Psoas muscle (tissue), 8 donors: ENCODE measurements at regions of chr11 and their contacts with region 1.

Region 1: GRCh38 chr11:74672956-74673692 is 58.1 kb downstream of the CHRDL2 start:
- DNase-seq: peak; percentile 89 to 93
- ATAC-seq: peak; percentile 92 to 94 (median 92)
- H3K4me3 ChIP-seq: no peak overlapping the region
- H3K27ac ChIP-seq: peak overlapping the region; percentile 82
- H3K4me1 ChIP-seq: peaks cover 17% of the 10 kb centered on the region
- H3K27me3 ChIP-seq: no peaks in the 10 kb centered on the region
- CTCF ChIP-seq: no peak

Region 2: DNA sequence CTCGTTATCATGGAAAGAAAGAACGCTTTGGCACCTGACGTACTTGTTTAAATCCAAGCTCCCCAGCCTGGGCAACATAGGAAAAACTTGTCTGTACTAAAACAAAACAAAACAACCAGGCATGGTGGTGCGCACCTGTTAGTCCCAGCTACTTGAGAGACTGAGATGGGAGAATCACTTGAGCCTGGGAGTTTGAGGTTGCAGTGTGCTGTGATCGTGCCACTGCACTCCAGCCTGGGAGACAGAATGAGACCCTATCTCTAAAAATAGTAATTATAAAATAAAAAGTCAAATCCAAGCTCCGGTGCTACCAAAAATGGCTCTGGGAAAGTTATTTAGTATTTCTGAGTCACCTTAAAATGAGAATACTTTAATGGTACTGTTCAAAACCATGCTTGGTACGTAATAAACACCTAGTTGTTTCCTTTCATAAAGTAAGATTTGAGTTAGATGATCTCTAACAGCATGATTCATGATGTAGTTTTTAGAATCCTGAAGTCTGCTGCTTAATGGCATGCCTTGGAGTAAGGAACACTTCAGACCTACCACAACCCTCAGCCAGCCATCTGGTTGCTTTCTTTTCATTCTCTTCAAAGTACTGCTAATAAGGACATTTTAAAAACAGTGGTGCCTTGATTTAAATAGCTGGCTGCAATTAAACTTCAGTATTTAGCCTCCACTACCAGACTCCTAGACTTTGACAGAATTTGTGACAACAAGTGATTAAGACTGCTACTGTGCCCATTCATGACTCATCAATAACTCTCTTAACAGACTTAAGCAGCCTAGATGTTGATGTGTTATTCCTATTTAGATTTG is 493.7 kb before region 1 on chr11:
- intact Hi-C with region 1: no loop called
- DNase-seq: no peak
- ATAC-seq: peak; percentile 89 to 95 (median 92)
- H3K4me3 ChIP-seq: peak overlapping the region; percentile 41
- H3K27ac ChIP-seq: peak overlapping the region; percentile 82
- H3K4me1 ChIP-seq: peaks cover 30% of the 10 kb centered on the region
- H3K27me3 ChIP-seq: no peaks in the 10 kb centered on the region
- CTCF ChIP-seq: no peak

Region 3: GRCh38 chr11:74634537-74634936 is 38.6 kb before region 1 on chr11:
- intact Hi-C with region 1: loop called in 1 of 2 experiments (anchors 5 kb)
- DNase-seq: no peak
- ATAC-seq: peak; percentile 75 to 83 (median 82)
- H3K4me3 ChIP-seq: no peak overlapping the region
- H3K27ac ChIP-seq: no peak overlapping the region
- H3K4me1 ChIP-seq: peaks cover 4% of the 10 kb centered on the region
- H3K27me3 ChIP-seq: no peaks in the 10 kb centered on the region
- CTCF ChIP-seq: peak; percentile 43